Heart right ventricle (tissue), 16 donors: ENCODE measurements at regions of chr14 and their contacts with region 1.

Region 1: DNA sequence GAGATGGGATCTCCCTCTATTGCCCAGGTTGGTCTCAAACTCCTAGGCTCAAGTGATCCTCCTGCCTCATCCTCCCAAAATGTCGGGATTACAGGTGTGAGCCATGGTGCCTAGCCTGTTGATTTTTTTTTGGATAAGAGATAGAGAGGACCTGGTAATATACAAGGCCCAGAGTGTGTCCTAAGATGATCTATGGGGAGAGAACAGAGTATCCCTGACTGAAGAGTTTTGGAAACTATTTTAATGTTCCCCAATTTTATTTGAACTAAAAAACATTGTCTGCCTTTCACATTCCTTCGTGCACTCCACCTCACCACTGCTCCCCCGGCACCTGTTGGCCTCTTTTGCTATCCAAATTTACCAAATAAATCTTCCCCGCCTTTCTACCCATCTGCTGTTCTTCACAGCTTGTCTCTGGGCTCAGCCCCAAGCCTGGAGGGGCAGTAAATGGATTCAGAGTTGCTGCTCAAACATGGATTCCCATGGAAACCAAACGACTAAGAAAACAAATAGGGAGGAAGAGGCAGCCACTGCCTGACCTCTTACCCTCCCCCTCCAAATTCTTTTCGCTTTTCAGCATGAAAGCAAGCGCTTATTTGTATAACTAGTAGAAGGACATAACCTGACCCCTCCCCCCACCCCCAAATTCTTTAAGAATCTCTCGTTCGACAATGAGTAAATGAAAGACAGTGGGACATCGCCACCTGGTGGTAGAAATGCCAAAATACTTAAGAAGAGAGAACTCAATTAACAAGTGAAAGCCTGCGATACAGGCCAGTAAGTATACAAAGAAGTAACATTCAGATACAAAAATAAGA is 22.6 kb downstream of the OR10G3 start:
- DNase-seq: peak; percentile 25 to 89
- ATAC-seq: peak; percentile 59 to 89 (median 86)
- H3K4me3 ChIP-seq: peak overlapping the region in 8 of 10 donors; percentile 21 to 51 (median 42)
- H3K27ac ChIP-seq: peak overlapping the region in 8 of 10 donors; percentile 1 to 66 (median 48)
- H3K4me1 ChIP-seq: peaks cover 0 to 11% (median 4%) of the 10 kb centered on the region in 9 donors
- H3K27me3 ChIP-seq: no peaks in the 10 kb centered on the region
- CTCF ChIP-seq: peak; percentile 58 to 79 (median 72)

Region 2: GRCh38 chr14:21455911-21456667 is 101.2 kb before region 1 on chr14 and contains the start of gene CHD8:
- intact Hi-C with region 1: loop called in 6 of 10 experiments (anchors 2 to 10 kb)
- DNase-seq: peak; percentile 99 to 100
- ATAC-seq: peak; percentile 99 to 100 (median 100)
- H3K4me3 ChIP-seq: peak within 1 kb of the TSS; percentile 77 to 93 (median 87)
- H3K27ac ChIP-seq: peak within 1 kb of the TSS; percentile 87 to 97 (median 94)
- H3K4me1 ChIP-seq: peaks cover 6 to 32% (median 25%) of the 10 kb centered on the region in 9 donors
- H3K27me3 ChIP-seq: no peaks in the 10 kb centered on the region
- CTCF ChIP-seq: peak; percentile 24 to 79 (median 69)
- total RNA-seq, gene CHD8: 31.1 to 47.5 (median 40.1) TPM

Region 3: GRCh38 chr14:21498553-21499526 is 58.5 kb before region 1 on chr14:
- intact Hi-C with region 1: loop called in 9 of 10 experiments (anchors 2 to 10 kb)
- DNase-seq: no peak
- ATAC-seq: peak in 4 of 8 donors; percentile 22 to 32 (median 24)
- H3K4me3 ChIP-seq: no peak overlapping the region
- H3K27ac ChIP-seq: no peak overlapping the region
- H3K4me1 ChIP-seq: no peaks in the 10 kb centered on the region
- H3K27me3 ChIP-seq: no peaks in the 10 kb centered on the region
- CTCF ChIP-seq: peak; percentile 6 to 61 (median 49)

Region 4: GRCh38 chr14:21505012-21505553 is 52.2 kb before region 1 on chr14:
- intact Hi-C with region 1: loop called in 3 of 10 experiments (anchors 2 to 10 kb)
- DNase-seq: no peak
- ATAC-seq: no peak
- H3K4me3 ChIP-seq: no peak overlapping the region
- H3K27ac ChIP-seq: peak overlapping the region in 1 of 10 donors; percentile 11
- H3K4me1 ChIP-seq: peaks cover 0 to 27% (median 13%) of the 10 kb centered on the region in 9 donors
- H3K27me3 ChIP-seq: no peaks in the 10 kb centered on the region
- CTCF ChIP-seq: no peak

Region 5: GRCh38 chr14:21510735-21511657 is 46.3 kb before region 1 on chr14 and contains the start of gene METTL3:
- intact Hi-C with region 1: loop called in 4 of 10 experiments (anchors 1 to 10 kb)
- DNase-seq: peak; percentile 94 to 99
- ATAC-seq: peak; percentile 99 to 100 (median 99)
- H3K4me3 ChIP-seq: peak within 1 kb of the TSS; percentile 48 to 94 (median 78)
- H3K27ac ChIP-seq: peak within 1 kb of the TSS in 9 of 10 donors; percentile 77 to 90 (median 85)
- H3K4me1 ChIP-seq: peaks cover 0 to 30% (median 19%) of the 10 kb centered on the region in 9 donors
- H3K27me3 ChIP-seq: peaks cover 0 to under 1% (median 0%) of the 10 kb centered on the region in 7 donors
- CTCF ChIP-seq: peak in 1 of 9 donors; percentile 3
- total RNA-seq, gene METTL3: 21.0 to 30.3 (median 24.0) TPM

Region 6: DNA sequence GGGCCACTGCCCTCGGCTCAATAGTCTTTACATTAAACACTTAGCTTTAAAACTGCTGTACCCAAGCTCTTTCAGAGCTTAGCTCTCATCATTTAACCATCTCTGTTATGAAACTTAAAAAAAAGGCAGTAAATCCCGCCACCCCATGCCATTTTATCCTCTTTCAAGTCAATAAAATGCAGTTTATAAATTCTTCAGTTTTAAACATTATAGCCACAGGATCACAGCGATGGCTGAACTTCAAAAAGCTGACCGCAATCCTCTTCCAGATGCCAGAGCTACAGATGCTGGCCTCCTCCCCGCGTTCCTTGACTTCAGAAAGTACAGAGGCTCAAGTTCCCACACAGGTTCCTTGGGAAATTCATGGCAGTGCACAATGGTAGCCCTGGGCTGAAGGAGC is 18.4 kb after region 1 on chr14:
- intact Hi-C with region 1: no loop called
- DNase-seq: no peak
- ATAC-seq: no peak
- H3K4me3 ChIP-seq: no peak overlapping the region
- H3K27ac ChIP-seq: no peak overlapping the region
- H3K4me1 ChIP-seq: no peaks in the 10 kb centered on the region
- H3K27me3 ChIP-seq: peaks cover 0 to 17% (median 2%) of the 10 kb centered on the region in 7 donors
- CTCF ChIP-seq: no peak